H1 (cell line): ENCODE measurements at regions of chr2 and their contacts with region 1.

Region 1: DNA sequence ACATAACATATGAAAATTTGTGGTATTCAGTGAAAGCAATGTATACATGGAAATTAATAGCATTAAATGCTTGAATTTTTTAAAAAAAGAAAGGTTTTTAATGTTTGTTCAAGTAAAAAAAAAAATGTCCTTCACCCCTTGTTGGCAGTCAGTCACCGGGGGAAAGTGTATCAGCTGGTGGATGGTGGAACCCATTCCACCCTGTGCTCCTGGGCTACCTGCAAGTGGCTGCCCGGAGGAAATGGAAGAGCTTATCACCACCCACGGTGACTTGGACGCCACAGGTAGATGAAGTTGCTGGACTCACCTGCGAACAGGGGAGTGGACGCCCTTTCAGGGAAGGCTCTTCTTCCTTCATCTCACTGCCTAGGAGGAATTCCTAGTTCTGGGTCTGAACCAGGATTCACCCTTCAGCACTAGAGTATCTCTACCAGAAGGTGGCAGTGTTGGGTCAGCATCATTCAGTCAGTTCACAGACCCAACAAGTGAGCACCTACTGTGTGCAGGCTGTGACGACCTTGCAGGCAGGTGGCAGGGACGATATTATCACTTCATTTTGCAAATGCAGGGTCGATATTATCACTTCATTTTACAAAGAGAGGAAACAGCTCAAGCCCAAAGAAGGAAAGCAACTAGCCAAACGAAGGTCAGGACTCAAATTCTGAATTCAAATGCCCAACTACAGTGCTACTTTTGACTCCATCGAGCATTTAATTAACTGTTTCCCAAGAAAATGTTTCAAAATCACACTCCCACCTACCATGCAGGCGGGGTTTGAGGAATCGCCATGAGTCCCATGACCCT is 35.8 kb downstream of the CIB4 start:
- DNase-seq: peak; percentile 36 to 72
- H3K4me3 ChIP-seq: no peak overlapping the region
- H3K27ac ChIP-seq: no peak overlapping the region
- H3K4me1 ChIP-seq: no peaks in the 10 kb centered on the region; a peak in 2 of 7 replicates
- H3K27me3 ChIP-seq: no peaks in the 10 kb centered on the region
- CTCF ChIP-seq: peak; percentile 62 to 96 (median 90)
- EP300 ChIP-seq: no peak
- POLR2A ChIP-seq: no peak
- RAD21 ChIP-seq: peak; percentile 94 to 98

Region 2: DNA sequence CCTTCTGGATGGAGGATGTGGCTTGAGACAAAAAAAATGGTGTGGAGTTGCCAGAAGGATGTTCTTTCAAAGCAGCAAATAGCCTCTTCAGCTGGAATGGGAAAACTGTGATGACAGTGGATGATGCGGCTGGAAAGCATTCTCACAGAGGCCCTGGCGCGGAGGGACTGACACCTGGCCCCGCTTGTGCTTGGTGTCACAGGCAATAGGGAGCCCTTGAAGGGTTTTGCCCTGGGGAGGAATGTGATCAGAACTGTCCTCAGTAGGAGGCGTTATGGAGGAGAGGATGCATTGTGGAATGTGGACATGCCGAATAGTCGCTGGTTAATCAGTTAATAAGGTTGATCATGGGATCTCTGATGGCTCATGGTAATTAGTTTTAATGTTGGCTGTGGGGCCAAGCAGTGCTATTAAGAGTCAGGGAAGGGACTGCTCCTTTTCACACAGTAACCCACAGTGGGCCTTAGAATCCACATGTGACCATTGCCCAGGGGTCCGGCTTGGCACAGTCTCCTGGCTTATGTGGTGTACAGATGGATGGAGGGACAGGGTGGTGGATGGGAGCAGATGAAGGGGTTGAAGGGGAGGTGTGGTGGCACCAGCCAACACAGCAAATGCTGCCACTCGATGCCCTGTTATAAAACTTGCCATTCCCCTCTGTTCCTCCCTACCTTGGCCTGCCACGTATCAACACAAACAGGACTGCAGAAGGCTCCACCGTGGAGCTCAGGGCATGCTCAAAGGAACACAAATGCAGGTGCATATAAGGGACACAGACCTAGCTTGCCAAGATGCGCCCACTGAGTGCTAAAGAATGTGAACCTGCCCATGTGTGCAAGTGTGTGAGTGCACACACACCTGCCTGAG is 35.9 kb before region 1 on chr2:
- CTCF ChIA-PET with region 1: no interaction called
- POLR2A ChIA-PET with region 1: no interaction called
- DNase-seq: no peak
- H3K4me3 ChIP-seq: no peak overlapping the region
- H3K27ac ChIP-seq: no peak overlapping the region
- H3K4me1 ChIP-seq: peaks cover 6 to 9% (median 8%) of the 10 kb centered on the region in 4 experiments; a peak in 5 of 7 replicates
- H3K27me3 ChIP-seq: no peaks in the 10 kb centered on the region; a peak in 3 of 7 replicates
- CTCF ChIP-seq: no peak
- EP300 ChIP-seq: no peak
- POLR2A ChIP-seq: no peak
- RAD21 ChIP-seq: no peak

Region 3: GRCh38 chr2:26591619-26592505 is 13.5 kb before region 1 on chr2:
- CTCF ChIA-PET with region 1: interaction called, 36 read pairs
- POLR2A ChIA-PET with region 1: interaction called, 3 read pairs
- DNase-seq: peak in 1 of 2 experiments; percentile 44
- H3K4me3 ChIP-seq: no peak overlapping the region
- H3K27ac ChIP-seq: no peak overlapping the region
- H3K4me1 ChIP-seq: peaks cover 0 to 4% (median 1%) of the 10 kb centered on the region in 4 experiments; a peak in 3 of 7 replicates
- H3K27me3 ChIP-seq: peaks cover 0 to 3% (median 0%) of the 10 kb centered on the region in 4 experiments; a peak in 1 of 7 replicates
- CTCF ChIP-seq: no peak
- EP300 ChIP-seq: no peak
- POLR2A ChIP-seq: no peak
- RAD21 ChIP-seq: no peak

Region 4: DNA sequence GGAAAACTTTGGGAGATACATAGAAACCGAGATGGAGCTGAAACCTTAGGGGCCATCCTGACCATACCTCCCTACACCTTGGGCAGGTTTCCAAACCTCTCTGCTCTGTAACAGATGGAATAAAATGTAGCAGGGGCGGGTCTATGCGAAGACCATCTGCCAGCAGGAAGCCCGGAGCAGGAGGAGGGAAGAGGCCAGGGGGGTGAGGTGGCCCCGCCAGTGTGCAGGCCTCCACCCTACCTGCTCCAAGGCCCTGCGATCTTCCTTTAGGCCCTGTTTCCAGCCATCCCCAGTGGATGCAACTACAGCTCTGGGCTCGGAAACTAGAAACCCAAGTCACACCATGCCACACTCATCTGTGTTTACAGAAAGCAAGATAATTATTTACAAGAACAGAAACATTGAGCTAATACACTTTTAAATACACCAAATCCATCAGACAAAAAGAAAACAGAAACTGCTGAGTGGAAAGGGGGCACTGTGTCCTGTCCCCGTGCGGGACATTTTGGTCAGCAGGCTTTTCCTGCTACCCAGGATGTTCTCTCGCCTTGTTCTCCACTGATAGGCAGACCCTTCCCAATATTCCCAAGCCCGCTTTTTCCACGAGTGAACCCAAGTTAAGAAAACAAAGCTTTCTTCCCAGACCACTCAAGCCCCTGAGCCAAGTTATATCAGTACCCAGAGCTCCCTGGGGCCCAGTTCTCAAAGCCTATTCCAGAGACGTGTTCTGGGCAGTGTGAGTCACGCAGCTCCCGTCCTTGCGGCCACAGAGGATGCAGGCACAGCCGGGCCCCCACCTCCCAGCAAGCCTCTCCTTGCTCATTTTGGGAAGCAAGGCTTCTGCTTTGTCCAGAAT is 18.4 kb after region 1 on chr2:
- CTCF ChIA-PET with region 1: interaction called, 17 read pairs
- POLR2A ChIA-PET with region 1: no interaction called
- DNase-seq: no peak
- H3K4me3 ChIP-seq: no peak overlapping the region
- H3K27ac ChIP-seq: no peak overlapping the region
- H3K4me1 ChIP-seq: no peaks in the 10 kb centered on the region; a peak in 2 of 7 replicates
- H3K27me3 ChIP-seq: no peaks in the 10 kb centered on the region; a peak in 1 of 7 replicates
- CTCF ChIP-seq: no peak
- EP300 ChIP-seq: no peak
- POLR2A ChIP-seq: no peak
- RAD21 ChIP-seq: no peak

Region 5: GRCh38 chr2:26630669-26631360 is 25.4 kb after region 1 on chr2:
- CTCF ChIA-PET with region 1: interaction called, 10 read pairs
- POLR2A ChIA-PET with region 1: no interaction called
- DNase-seq: no peak
- H3K4me3 ChIP-seq: no peak overlapping the region
- H3K27ac ChIP-seq: no peak overlapping the region
- H3K4me1 ChIP-seq: no peaks in the 10 kb centered on the region
- H3K27me3 ChIP-seq: no peaks in the 10 kb centered on the region; a peak in 1 of 7 replicates
- CTCF ChIP-seq: no peak
- EP300 ChIP-seq: no peak
- POLR2A ChIP-seq: no peak
- RAD21 ChIP-seq: no peak

Region 6: GRCh38 chr2:26727641-26728561 is 122.5 kb after region 1 on chr2:
- CTCF ChIA-PET with region 1: interaction called, 20 read pairs
- POLR2A ChIA-PET with region 1: no interaction called
- DNase-seq: no peak
- H3K4me3 ChIP-seq: no peak overlapping the region
- H3K27ac ChIP-seq: no peak overlapping the region
- H3K4me1 ChIP-seq: no peaks in the 10 kb centered on the region
- H3K27me3 ChIP-seq: no peaks in the 10 kb centered on the region; a peak in 1 of 7 replicates
- CTCF ChIP-seq: peak in 1 of 3 experiments; percentile 24; a peak in 1 of 4 replicates
- EP300 ChIP-seq: no peak
- POLR2A ChIP-seq: no peak
- RAD21 ChIP-seq: no peak